ENCODE measurements at regions of chr11 and their contacts with region 1.

Region 1: DNA sequence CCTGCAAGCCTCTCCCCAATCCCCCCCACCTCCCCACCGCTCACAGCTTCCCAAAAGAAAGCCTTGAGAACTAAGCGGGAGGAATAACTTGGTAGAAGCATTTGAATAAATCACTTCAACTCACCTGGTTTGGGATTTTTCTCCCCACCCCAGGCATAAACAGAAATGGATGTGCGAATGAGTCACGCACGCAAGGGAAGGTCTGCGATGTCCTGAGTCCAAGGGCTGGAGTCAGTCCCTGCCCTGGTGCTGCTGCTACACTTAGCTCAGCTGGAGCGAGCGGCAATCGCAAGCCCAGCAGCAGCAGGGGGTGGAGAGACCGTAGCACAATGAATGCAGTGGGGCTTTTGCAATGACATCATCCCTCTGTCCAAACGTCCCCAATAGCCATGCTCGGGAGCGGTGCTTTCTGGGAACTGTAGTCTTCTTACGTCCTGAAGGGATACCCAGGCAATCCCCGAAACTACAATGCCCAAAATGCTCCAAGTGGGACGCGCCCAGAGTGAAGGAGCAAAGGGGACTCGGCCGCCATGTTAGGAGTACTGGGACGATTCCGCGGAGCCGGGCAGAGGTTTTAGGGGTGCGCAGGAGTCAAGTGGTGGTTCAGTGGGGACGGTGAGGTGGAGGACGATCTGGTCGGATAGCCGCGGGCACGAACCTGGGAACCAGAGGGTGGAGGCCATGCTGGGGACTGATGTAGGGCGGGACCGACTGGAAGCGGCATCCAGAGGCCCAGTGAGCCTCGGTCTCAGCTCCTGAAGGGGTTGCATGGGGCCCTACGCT is at the start of gene RAB30:
- DNase-seq: peak; percentile 99
- H3K4me3 ChIP-seq: peak within 1 kb of the TSS; percentile 77 to 81
- H3K27ac ChIP-seq: peak within 1 kb of the TSS; percentile 92 to 93
- H3K4me1 ChIP-seq: peaks cover 0 to 44% (median 29%) of the 10 kb centered on the region in 4 donors
- H3K27me3 ChIP-seq: no peaks in the 10 kb centered on the region
- CTCF ChIP-seq: no peak

Region 2: GRCh38 chr11:82117362-82117761 is 954.4 kb before region 1 on chr11:
- intact Hi-C with region 1: no loop called
- DNase-seq: no peak
- H3K4me3 ChIP-seq: no peak overlapping the region
- H3K27ac ChIP-seq: no peak overlapping the region
- H3K4me1 ChIP-seq: peaks cover 0 to 4% (median 0%) of the 10 kb centered on the region in 4 donors
- H3K27me3 ChIP-seq: peaks cover 0 to 3% of the 10 kb centered on the region in 2 donors
- CTCF ChIP-seq: no peak

Region 3: GRCh38 chr11:82978422-82979099 is 93.2 kb before region 1 on chr11:
- intact Hi-C with region 1: no loop called
- DNase-seq: no peak
- H3K4me3 ChIP-seq: no peak overlapping the region
- H3K27ac ChIP-seq: peak overlapping the region; percentile 62 to 70
- H3K4me1 ChIP-seq: peaks cover 0 to 57% (median 20%) of the 10 kb centered on the region in 4 donors
- H3K27me3 ChIP-seq: no peaks in the 10 kb centered on the region
- CTCF ChIP-seq: no peak

Region 4: DNA sequence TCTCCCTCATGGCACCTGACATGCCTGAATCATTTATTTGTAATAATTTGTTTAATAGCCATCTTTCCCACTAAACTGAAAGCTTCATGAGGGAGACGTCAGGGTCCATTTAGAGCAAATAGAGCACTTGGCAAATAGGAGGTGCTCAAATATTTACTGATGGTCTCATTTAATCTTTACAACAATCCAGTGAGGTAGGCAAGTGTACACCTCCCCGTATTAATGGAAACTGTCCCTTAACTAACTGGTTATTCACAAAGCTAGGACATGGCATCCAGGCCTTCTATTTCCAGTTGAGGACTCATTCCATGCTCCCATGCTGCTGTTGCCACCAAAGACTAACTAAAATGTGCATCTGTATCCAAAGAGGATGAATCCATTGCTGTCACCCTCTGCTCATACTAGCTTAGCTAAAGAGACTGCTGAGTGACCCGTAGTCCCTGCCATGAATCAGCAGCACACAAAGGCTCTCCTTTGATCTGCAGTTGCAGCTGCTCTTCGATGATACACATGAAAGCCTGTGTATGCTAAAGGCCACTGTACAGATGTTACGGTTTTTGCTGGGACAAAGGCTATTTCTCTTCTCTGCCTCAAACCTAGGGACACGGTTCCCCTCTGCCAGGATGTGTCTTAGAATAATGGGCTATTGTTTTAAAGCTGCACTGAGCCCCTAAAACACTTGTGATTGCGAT is 82.7 kb before region 1 on chr11:
- intact Hi-C with region 1: loop called (anchors 5 kb)
- DNase-seq: no peak
- H3K4me3 ChIP-seq: no peak overlapping the region
- H3K27ac ChIP-seq: no peak overlapping the region
- H3K4me1 ChIP-seq: peaks cover 0 to 14% (median 5%) of the 10 kb centered on the region in 4 donors
- H3K27me3 ChIP-seq: no peaks in the 10 kb centered on the region
- CTCF ChIP-seq: no peak

Region 5: GRCh38 chr11:83156150-83156995 is 84.6 kb after region 1 on chr11:
- intact Hi-C with region 1: loop called (anchors 5 kb)
- DNase-seq: peak; percentile 99 to 100
- H3K4me3 ChIP-seq: peak overlapping the region; percentile 60 to 88
- H3K27ac ChIP-seq: peak overlapping the region; percentile 88 to 98
- H3K4me1 ChIP-seq: peaks cover 0 to 25% (median 8%) of the 10 kb centered on the region in 4 donors
- H3K27me3 ChIP-seq: no peaks in the 10 kb centered on the region
- CTCF ChIP-seq: no peak

Region 6: GRCh38 chr11:83170865-83171264 is 99.1 kb after region 1 on chr11:
- intact Hi-C with region 1: no loop called
- DNase-seq: no peak
- H3K4me3 ChIP-seq: peak overlapping the region; percentile 1 to 17
- H3K27ac ChIP-seq: peak overlapping the region in 1 of 2 donors; percentile 8
- H3K4me1 ChIP-seq: peaks cover 0 to 71% (median 51%) of the 10 kb centered on the region in 4 donors
- H3K27me3 ChIP-seq: no peaks in the 10 kb centered on the region
- CTCF ChIP-seq: no peak

Region 7: GRCh38 chr11:83464160-83464944 is 392.6 kb after region 1 on chr11:
- intact Hi-C with region 1: no loop called
- DNase-seq: no peak
- H3K4me3 ChIP-seq: no peak overlapping the region
- H3K27ac ChIP-seq: no peak overlapping the region
- H3K4me1 ChIP-seq: no peaks in the 10 kb centered on the region
- H3K27me3 ChIP-seq: no peaks in the 10 kb centered on the region
- CTCF ChIP-seq: no peak